ENCODE measurements at regions of chr16 and their contacts with region 1.

Region 1: GRCh38 chr16:28181515-28181914 is 30.2 kb downstream of the XPO6 start:
- DNase-seq: no peak
- ATAC-seq: peak; percentile 48
- H3K4me3 ChIP-seq: peak overlapping the region; percentile 57; the same call in 1 of the 2 replicates
- H3K27ac ChIP-seq: peak overlapping the region; percentile 89
- H3K4me1 ChIP-seq: peaks cover 39% of the 10 kb centered on the region
- H3K27me3 ChIP-seq: no peaks in the 10 kb centered on the region
- CTCF ChIP-seq: no peak
- EP300 ChIP-seq: no peak
- POLR2A ChIP-seq: no peak
- RAD21 ChIP-seq: no peak

Region 2: DNA sequence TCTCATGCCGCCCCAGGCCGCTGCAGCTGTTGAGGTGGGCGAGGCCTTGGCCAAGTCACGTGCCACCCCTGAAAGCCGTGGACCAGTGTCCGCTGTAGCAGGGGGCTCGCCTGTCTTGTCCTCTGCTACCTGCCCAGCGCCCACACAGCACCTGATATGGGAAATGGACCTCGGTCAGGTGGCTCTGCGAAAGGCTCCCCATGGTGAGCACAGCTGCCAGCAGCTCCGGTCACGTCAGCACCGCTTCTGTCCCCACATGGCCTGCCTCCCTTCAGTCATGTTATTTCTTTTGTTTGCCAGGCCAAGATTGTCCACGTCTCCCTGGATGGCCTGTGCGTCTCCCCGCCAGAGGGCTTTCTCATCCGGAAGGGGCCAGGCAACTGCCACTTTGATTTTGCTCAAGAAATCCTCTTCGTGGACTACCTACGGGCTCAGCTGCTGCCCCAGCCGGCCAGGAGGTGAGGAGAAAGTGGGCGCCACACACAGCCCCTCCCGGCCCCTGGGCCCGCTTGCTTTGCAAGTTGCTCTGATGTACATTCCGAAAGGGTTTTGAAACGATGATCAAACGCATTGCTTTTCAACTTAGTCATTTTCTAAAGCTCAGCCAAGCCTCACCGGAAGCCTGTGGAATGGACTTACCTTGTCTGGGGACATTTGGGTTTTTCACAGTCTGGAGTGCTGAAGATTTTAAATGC is 411.8 kb before region 1 on chr16:
- CTCF ChIA-PET with region 1: no interaction called
- POLR2A ChIA-PET with region 1: no interaction called
- RAD21 ChIA-PET with region 1: no interaction called
- SMC1A ChIA-PET with region 1: no interaction called
- in situ Hi-C with region 1: no loop called
- intact Hi-C with region 1: no loop called
- DNase-seq: no peak
- ATAC-seq: no peak
- H3K4me3 ChIP-seq: no peak overlapping the region
- H3K27ac ChIP-seq: no peak overlapping the region
- H3K4me1 ChIP-seq: no peaks in the 10 kb centered on the region
- H3K27me3 ChIP-seq: no peaks in the 10 kb centered on the region
- CTCF ChIP-seq: no peak
- EP300 ChIP-seq: no peak
- POLR2A ChIP-seq: no peak
- RAD21 ChIP-seq: no peak

Region 3: DNA sequence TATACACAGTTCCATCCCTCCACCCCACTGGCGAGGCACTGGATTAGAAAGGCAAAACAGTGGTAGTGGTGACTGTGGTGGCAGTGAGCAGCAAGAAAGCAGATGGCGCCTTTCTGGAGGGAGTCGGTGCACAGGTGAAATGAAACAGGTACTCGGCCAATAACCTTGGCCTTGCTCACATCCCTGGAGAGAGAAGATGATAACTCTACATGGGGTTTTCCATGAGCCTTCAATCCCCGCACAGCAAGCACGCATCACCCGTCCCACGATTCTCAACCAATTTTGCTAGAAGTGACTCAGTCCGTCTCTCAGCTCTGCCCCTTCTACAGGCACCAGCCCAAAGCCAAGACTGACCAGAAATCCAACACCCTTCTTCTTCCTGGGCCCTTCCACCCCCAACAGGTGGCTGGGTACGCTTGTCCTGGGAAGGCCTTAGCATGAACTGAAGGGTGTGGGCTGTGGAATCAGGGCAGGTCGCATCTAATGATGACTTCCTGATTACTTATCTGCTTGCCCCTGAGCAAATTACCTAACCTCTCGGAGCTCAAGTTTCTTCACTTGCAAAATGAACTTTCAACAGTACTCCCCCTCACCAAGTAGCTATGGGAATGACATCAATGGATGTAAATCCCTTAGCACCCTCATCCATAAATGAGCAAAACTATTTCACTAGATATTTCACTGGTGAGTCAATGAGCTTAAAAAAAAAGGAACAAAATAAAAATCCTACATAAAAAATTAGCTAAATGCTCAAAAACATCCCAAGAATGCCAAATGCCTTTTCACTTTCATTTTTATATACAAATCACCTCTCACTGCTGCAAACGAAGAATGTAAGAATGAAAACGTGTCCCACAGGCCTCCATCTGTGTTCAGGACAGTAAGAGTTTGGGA is 12.3 kb after region 1 on chr16:
- CTCF ChIA-PET with region 1: interaction called, 8 read pairs
- POLR2A ChIA-PET with region 1: interaction called, 19 read pairs
- RAD21 ChIA-PET with region 1: interaction called, 9 read pairs
- SMC1A ChIA-PET with region 1: interaction called, 11 read pairs
- in situ Hi-C with region 1: no loop called
- intact Hi-C with region 1: no loop called
- DNase-seq: no peak
- ATAC-seq: peak; percentile 52
- H3K4me3 ChIP-seq: peak overlapping the region; percentile 48; the same call in 1 of the 2 replicates
- H3K27ac ChIP-seq: peak overlapping the region; percentile 86
- H3K4me1 ChIP-seq: peaks cover 49% of the 10 kb centered on the region
- H3K27me3 ChIP-seq: no peaks in the 10 kb centered on the region
- CTCF ChIP-seq: no peak
- EP300 ChIP-seq: no peak
- POLR2A ChIP-seq: peak; percentile 10; the same call in 1 of the 2 replicates
- RAD21 ChIP-seq: no peak